WTC11 (cell line): ENCODE measurements at regions of chr16 and their contacts with region 1.

Region 1: DNA sequence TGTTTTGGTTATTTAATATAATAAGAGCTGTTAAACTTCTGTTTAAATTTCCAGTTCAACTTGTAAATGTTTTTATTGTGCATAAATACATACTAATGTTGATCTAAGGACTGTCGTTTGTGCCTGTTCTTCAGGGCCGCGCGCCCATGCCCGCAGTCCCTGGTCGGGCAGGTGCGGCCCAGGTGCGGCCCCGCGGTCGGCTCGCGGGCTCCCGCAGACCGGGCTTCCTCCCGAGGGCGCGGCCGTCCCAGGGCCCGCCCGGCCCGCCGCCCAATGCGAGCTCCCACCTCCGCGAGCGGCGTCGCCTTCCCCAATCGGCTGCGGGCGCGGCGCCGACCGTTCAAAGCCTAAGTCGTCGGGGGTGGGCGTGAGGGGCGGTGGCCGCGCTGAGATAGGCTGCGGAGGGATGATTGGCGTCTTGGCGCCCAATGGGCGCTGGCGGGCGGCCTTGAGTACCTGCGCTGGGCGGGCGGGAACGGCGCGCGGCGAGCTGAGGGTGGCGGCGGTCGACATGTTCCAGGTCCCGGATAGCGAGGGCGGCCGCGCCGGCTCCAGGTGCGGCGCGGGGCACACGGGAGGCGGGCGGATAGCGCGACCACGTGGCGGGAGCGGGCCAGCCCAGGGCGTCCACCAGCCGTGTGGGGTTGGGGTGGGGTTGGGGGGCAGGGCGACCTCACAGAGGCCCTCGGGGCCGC is at the start of gene JPT2:
- DNase-seq: peak; percentile 98
- ATAC-seq: peak; percentile 95
- H3K4me3 Mint-ChIP-seq: peak within 1 kb of the TSS; percentile 90
- H3K27ac Mint-ChIP-seq: peak within 1 kb of the TSS; percentile 95
- H3K4me1 Mint-ChIP-seq: peaks cover 31% of the 10 kb centered on the region
- H3K27me3 Mint-ChIP-seq: no peaks in the 10 kb centered on the region
- CTCF ChIP-seq: no peak
- total RNA-seq, gene JPT2: 150 to 169 TPM (median 157 TPM) in 3 replicates

Region 2: DNA sequence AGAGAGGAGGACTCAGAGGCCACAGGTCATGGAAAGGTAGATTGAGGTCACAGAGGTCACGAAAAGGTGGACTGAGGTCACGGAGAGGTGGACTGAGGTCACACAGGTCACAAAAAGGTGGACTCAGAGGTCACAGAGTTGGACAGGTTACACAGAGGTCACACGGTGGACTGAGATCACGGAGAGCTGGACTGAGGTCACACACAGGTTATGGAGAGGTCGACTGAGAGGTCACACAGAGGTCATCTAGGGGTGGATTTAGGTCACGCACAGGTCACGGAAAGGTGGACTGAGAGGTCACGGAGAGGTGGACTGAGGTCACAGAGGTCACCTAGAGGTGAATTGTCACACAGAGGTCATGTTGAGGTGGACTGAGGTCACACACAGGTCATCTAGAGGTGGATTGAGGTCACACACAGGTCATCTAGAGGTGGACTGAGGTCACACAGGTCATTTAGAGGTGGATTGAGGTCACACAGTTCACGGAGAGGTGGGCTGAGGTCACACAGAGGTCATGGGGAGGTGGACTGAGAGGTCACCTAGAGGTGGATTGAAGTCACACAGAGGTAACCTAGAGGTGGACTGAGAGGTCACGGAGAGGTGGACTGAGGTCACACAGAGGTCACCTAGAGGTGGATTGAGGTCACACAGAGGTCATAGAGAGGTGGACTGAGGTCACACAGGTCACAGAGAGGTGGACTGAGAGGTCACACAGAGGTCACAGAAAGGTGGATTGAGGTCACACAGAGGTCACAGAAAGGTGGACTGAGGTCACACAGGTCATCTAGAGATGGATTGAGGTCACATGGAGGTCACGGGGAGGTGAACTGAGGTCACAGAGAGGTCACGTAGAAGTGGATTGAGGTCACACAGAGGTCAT is 26.6 kb before region 1 on chr16:
- CTCF ChIA-PET with region 1: no interaction called
- POLR2A ChIA-PET with region 1: no interaction called
- DNase-seq: no peak
- ATAC-seq: no peak
- H3K4me3 Mint-ChIP-seq: no peak overlapping the region
- H3K27ac Mint-ChIP-seq: peak overlapping the region; percentile 42; the same call in 1 of the 2 replicates
- H3K4me1 Mint-ChIP-seq: no peaks in the 10 kb centered on the region
- H3K27me3 Mint-ChIP-seq: no peaks in the 10 kb centered on the region
- CTCF ChIP-seq: no peak

Region 3: DNA sequence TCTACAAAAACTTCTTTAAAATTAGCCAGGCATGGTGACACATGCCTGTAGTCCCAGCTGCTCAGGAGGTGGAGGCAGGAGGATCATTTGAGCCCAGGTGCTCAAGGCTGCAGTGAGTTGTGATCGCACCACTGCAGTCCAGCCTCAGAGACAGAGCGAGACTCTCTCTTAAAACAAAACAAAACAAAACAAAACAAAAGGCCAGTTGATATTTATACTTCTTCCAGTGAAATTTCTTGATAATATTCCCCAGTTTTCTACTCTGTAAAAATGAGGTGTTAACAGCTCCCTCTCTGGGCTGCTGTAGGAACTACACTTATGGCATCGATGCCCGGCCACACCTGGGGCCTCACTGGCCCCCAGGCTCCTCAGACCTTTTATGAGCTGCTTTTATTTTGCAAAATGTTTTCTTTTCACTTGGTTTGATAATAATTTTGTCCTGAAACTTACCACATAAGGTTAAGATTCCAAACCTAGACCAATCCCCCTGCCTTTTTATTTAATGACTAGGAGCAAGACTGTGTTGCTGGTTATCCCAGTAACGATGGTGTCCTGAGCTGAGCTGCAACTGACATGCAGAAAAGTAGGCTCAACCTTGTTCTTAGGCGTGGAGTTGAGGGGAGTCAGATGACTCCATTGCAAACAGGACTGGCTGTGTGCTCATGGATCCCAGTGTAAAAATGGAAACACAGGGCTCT is 45.6 kb after region 1 on chr16:
- CTCF ChIA-PET with region 1: interaction called, 16 read pairs
- POLR2A ChIA-PET with region 1: no interaction called
- DNase-seq: peak; percentile 65
- ATAC-seq: peak; percentile 71
- H3K4me3 Mint-ChIP-seq: no peak overlapping the region
- H3K27ac Mint-ChIP-seq: no peak overlapping the region
- H3K4me1 Mint-ChIP-seq: 0 out of 2 replicates have a peak, but pooled peaks cover 3% of the 10 kb centered on the region
- H3K27me3 Mint-ChIP-seq: no peaks in the 10 kb centered on the region
- CTCF ChIP-seq: peak; percentile 69

Region 4: DNA sequence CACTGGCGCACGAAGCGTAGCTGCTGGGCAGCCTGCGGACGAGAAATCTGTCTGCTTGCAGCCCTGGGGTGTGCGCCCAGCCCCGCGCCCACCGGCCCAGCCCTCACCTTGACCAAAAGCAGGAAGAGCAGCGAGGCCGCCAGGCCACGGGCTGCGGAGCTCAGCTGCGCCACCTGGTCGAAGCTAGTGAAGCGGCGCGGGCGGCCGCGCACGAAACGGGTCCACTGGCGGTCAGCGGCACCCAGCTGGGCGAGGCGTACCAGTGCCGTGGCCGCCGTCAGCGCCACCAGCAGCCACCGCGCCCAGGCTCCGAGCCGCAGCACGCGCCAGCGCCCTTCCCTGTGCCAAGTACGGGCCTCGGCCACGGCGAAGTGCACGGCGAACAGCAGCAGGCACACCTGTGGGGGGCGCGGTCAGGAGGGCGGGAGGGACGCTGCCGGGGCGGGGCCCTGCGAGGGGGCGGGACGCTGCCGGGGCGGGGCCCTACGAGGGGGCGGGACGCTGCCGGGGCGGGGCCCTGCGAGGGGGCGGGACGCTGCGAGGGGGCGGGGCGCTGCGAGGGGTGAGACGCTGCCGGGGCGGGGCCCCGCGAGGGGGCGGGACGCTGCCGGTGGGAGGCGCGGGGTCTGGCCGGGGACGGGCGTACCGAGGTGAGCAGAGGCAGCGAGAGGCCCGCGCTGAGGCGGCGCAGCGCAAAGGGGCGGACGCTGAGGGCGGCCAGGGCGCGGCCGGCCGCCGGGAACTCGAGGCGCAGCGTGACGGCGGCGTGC is 413.0 kb after region 1 on chr16:
- CTCF ChIA-PET with region 1: no interaction called
- POLR2A ChIA-PET with region 1: no interaction called
- DNase-seq: peak; percentile 95
- ATAC-seq: peak; percentile 84
- H3K4me3 Mint-ChIP-seq: peak overlapping the region; percentile 55
- H3K27ac Mint-ChIP-seq: no peak overlapping the region
- H3K4me1 Mint-ChIP-seq: no peaks in the 10 kb centered on the region
- H3K27me3 Mint-ChIP-seq: no peaks in the 10 kb centered on the region
- CTCF ChIP-seq: no peak